ENCODE measurements at regions of chr11 and their contacts with region 1.

Region 1: DNA sequence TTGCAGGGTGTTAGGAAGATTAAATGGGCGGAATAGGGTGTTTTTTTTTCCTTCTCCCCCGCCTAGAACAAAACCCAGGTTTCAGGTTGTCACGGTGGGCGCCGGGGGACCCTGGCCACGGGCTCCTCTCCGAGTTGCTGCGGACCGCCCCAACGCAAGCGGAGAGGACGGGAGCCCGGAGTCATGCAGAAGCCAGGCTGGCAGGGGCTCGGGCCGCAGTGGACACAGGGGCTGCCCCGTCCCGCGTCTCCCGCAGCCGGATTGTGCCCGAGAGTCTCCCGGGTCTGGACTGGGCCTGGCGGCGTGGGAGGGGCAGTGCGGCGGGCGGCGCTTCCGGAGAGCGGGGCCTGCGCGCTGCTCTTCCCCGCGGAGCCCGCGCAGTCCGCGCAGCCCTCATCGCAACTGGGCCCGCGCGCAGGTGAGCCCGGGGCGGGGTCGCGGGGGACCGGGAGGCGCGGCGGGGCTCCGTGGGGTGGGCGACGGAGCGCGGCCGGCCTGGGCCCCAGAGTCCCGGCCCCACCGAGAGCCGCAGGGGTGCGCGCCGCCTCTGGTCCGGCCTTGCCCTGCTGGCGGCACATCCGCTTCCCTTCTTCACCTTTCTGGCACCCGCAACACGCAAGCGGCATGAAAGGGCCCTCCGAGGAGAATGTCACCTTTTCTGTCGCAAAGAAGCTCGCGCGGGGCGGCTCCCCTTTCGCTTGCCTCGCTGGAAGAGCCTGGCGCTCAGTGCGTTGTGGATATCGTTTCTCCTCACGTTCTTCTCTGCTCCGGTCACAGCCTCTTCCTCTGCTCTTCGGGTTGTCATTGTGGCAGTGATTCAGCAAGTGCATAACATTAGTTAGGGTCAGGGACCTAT is at the start of gene TIRAP:
- DNase-seq: peak; percentile 70
- H3K4me3 Mint-ChIP-seq: peak within 1 kb of the TSS; percentile 95
- H3K27ac Mint-ChIP-seq: peak within 1 kb of the TSS; percentile 93
- H3K4me1 Mint-ChIP-seq: peaks cover 49% of the 10 kb centered on the region
- H3K27me3 Mint-ChIP-seq: no peaks in the 10 kb centered on the region
- total RNA-seq, gene TIRAP: 2.7 to 3.5 TPM

Region 2: GRCh38 chr11:125902927-125903710 is 379.8 kb before region 1 on chr11 and contains the start of gene PUS3:
- CTCF ChIA-PET with region 1: no interaction called
- intact Hi-C with region 1: loop called (anchors 5 kb)
- DNase-seq: peak; percentile 93
- H3K4me3 Mint-ChIP-seq: peak within 1 kb of the TSS; percentile 94
- H3K27ac Mint-ChIP-seq: peak within 1 kb of the TSS; percentile 95
- H3K4me1 Mint-ChIP-seq: peaks cover 37% of the 10 kb centered on the region
- H3K27me3 Mint-ChIP-seq: peaks cover 22% of the 10 kb centered on the region
- total RNA-seq, gene PUS3: 14.9 to 18.5 TPM

Region 3: GRCh38 chr11:125950696-125951651 is 332.0 kb before region 1 on chr11:
- CTCF ChIA-PET with region 1: no interaction called
- intact Hi-C with region 1: no loop called
- DNase-seq: no peak
- H3K4me3 Mint-ChIP-seq: no peak overlapping the region
- H3K27ac Mint-ChIP-seq: no peak overlapping the region
- H3K4me1 Mint-ChIP-seq: no peaks in the 10 kb centered on the region
- H3K27me3 Mint-ChIP-seq: peaks cover 4% of the 10 kb centered on the region

Region 4: GRCh38 chr11:125990244-125990643 is 292.7 kb before region 1 on chr11:
- CTCF ChIA-PET with region 1: no interaction called
- intact Hi-C with region 1: no loop called
- DNase-seq: peak; percentile 14
- H3K4me3 Mint-ChIP-seq: no peak overlapping the region
- H3K27ac Mint-ChIP-seq: no peak overlapping the region
- H3K4me1 Mint-ChIP-seq: peaks cover under 1% of the 10 kb centered on the region
- H3K27me3 Mint-ChIP-seq: no peaks in the 10 kb centered on the region

Region 5: GRCh38 chr11:126268708-126269579 is 14.0 kb before region 1 on chr11 and contains the starts of genes FOXRED1 and SRPRA:
- CTCF ChIA-PET with region 1: interaction called, 3 read pairs
- intact Hi-C with region 1: loop called (anchors 1 kb)
- DNase-seq: peak; percentile 100
- H3K4me3 Mint-ChIP-seq: peak within 1 kb of the TSS; percentile 93
- H3K27ac Mint-ChIP-seq: peak within 1 kb of the TSS; percentile 95
- H3K4me1 Mint-ChIP-seq: peaks cover 33% of the 10 kb centered on the region
- H3K27me3 Mint-ChIP-seq: no peaks in the 10 kb centered on the region
- total RNA-seq, gene FOXRED1: 41.2 to 48.6 TPM
- total RNA-seq, gene SRPRA: 137 to 142 TPM

Region 6: GRCh38 chr11:126310228-126310991 is 27.4 kb after region 1 on chr11:
- CTCF ChIA-PET with region 1: interaction called, 13 read pairs
- intact Hi-C with region 1: no loop called
- DNase-seq: peak; percentile 70
- H3K4me3 Mint-ChIP-seq: no peak overlapping the region
- H3K27ac Mint-ChIP-seq: no peak overlapping the region
- H3K4me1 Mint-ChIP-seq: peaks cover 17% of the 10 kb centered on the region
- H3K27me3 Mint-ChIP-seq: no peaks in the 10 kb centered on the region

Region 7: DNA sequence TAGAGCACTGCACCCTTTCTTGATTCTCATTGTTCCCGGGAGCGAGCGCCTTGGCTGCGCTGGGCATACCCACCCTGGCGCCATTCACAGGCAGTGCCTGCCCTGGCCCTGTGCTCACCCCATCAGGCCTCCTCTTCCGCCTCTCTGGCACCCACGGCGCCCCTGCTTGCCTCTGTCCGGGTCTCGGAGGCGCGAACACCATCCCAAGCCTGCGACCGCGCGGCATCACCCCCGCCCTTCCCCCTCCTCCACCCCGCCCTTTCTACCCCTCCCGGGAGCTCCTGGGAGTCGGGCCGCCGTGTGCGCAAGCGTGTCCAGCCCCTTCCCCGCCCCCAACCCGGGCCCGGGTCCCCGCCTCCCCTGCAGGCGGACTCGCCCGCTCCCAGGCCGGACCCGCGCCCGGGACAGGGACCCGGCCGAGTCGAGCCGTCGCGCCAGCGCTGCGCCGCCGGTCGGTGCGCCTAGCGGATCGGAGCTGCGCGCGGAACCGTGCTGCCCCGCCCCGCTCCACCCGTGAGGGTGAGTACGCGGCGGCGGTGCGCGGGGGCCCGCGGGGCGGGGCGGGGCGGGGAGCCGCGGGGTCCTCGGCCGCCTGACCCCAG is 72.5 kb after region 1 on chr11 and contains the start of gene ST3GAL4:
- CTCF ChIA-PET with region 1: no interaction called
- intact Hi-C with region 1: loop called (anchors 2 kb)
- DNase-seq: peak; percentile 76
- H3K4me3 Mint-ChIP-seq: peak within 1 kb of the TSS; percentile 91
- H3K27ac Mint-ChIP-seq: peak within 1 kb of the TSS; percentile 82
- H3K4me1 Mint-ChIP-seq: peaks cover 33% of the 10 kb centered on the region
- H3K27me3 Mint-ChIP-seq: no peaks in the 10 kb centered on the region
- total RNA-seq, gene ST3GAL4: 7.6 to 8.0 TPM